ENCODE measurements at regions of chr4 and their contacts with region 1.

Region 1: GRCh38 chr4:105555409-105555808 is 3.0 kb downstream of the ARHGEF38 start:
- DNase-seq: no peak
- ATAC-seq: no peak
- H3K4me3 ChIP-seq: no peak overlapping the region
- H3K27ac ChIP-seq: no peak overlapping the region
- H3K4me1 ChIP-seq: no peaks in the 10 kb centered on the region
- H3K27me3 ChIP-seq: no peaks in the 10 kb centered on the region; the same call in 1 of the 2 replicates
- CTCF ChIP-seq: no peak

Region 2: GRCh38 chr4:104630272-104630671 is 925.1 kb before region 1 on chr4:
- CTCF ChIA-PET with region 1: no interaction called
- POLR2A ChIA-PET with region 1: interaction called, 20 read pairs
- in situ Hi-C with region 1: no loop called
- intact Hi-C with region 1: no loop called
- DNase-seq: no peak
- ATAC-seq: no peak
- H3K4me3 ChIP-seq: no peak overlapping the region
- H3K27ac ChIP-seq: no peak overlapping the region
- H3K4me1 ChIP-seq: no peaks in the 10 kb centered on the region
- H3K27me3 ChIP-seq: no peaks in the 10 kb centered on the region
- CTCF ChIP-seq: no peak

Region 3: GRCh38 chr4:105831189-105831588 is 275.8 kb after region 1 on chr4:
- CTCF ChIA-PET with region 1: no interaction called
- POLR2A ChIA-PET with region 1: no interaction called
- in situ Hi-C with region 1: no loop called
- intact Hi-C with region 1: no loop called
- DNase-seq: no peak
- ATAC-seq: no peak
- H3K4me3 ChIP-seq: no peak overlapping the region
- H3K27ac ChIP-seq: no peak overlapping the region
- H3K4me1 ChIP-seq: no peaks in the 10 kb centered on the region
- H3K27me3 ChIP-seq: no peaks in the 10 kb centered on the region
- CTCF ChIP-seq: no peak